ENCODE measurements at regions of chr22 and their contacts with region 1.

Region 1: GRCh38 chr22:38921806-38922205 is 35.6 kb upstream of the APOBEC3A start:
- DNase-seq: no peak
- ATAC-seq: no peak
- H3K4me3 ChIP-seq: no peak overlapping the region
- H3K4me3 Mint-ChIP-seq: no peak overlapping the region
- H3K27ac ChIP-seq: no peak overlapping the region
- H3K27ac Mint-ChIP-seq: no peak overlapping the region
- H3K4me1 ChIP-seq: no peaks in the 10 kb centered on the region
- H3K4me1 Mint-ChIP-seq: no peaks in the 10 kb centered on the region
- H3K27me3 ChIP-seq: peaks cover 0 to 32% (median 10%) of the 10 kb centered on the region in 4 experiments
- H3K27me3 Mint-ChIP-seq: peaks cover 56% of the 10 kb centered on the region
- CTCF ChIP-seq: no peak

Region 2: GRCh38 chr22:38824585-38824984 is 97.2 kb before region 1 on chr22:
- CTCF ChIA-PET with region 1: no interaction called
- POLR2A ChIA-PET with region 1: no interaction called
- intact Hi-C with region 1: no loop called
- DNase-seq: peak; percentile 56
- ATAC-seq: peak; percentile 49
- H3K4me3 ChIP-seq: no peak overlapping the region
- H3K4me3 Mint-ChIP-seq: no peak overlapping the region
- H3K27ac ChIP-seq: no peak overlapping the region
- H3K27ac Mint-ChIP-seq: peak overlapping the region; percentile 47
- H3K4me1 ChIP-seq: no peaks in the 10 kb centered on the region
- H3K4me1 Mint-ChIP-seq: no peaks in the 10 kb centered on the region
- H3K27me3 ChIP-seq: no peaks in the 10 kb centered on the region
- H3K27me3 Mint-ChIP-seq: peaks cover 12% of the 10 kb centered on the region
- CTCF ChIP-seq: no peak

Region 3: DNA sequence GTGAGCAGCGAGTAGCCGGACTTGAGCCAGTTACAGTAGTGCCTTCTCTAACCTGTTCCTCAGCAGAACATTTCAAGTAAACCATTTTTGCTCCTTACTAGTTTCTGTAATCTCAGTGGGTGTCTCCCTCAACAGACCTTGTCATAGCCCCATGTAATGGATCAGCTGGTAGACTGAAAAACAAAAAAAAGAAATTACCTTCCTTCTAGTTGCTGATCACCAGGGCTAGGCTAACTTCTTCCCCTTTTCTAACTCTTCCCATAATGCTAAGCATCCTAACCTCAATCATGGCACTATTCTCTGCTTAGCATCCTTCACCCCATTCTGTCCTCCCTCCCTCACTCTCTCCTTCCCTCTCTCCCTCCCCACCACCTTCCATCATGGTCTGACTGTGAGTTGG is 14.0 kb before region 1 on chr22:
- CTCF ChIA-PET with region 1: no interaction called
- POLR2A ChIA-PET with region 1: interaction called, 10 read pairs
- intact Hi-C with region 1: no loop called
- DNase-seq: no peak
- ATAC-seq: no peak
- H3K4me3 ChIP-seq: no peak overlapping the region
- H3K4me3 Mint-ChIP-seq: no peak overlapping the region
- H3K27ac ChIP-seq: no peak overlapping the region
- H3K27ac Mint-ChIP-seq: no peak overlapping the region
- H3K4me1 ChIP-seq: peaks cover 0 to 6% of the 10 kb centered on the region in 2 donors
- H3K4me1 Mint-ChIP-seq: no peaks in the 10 kb centered on the region
- H3K27me3 ChIP-seq: peaks cover 0 to 11% (median 2%) of the 10 kb centered on the region in 4 experiments
- H3K27me3 Mint-ChIP-seq: peaks cover 40% of the 10 kb centered on the region
- CTCF ChIP-seq: no peak

Region 4: GRCh38 chr22:38973289-38974169 is 51.7 kb after region 1 on chr22:
- CTCF ChIA-PET with region 1: no interaction called
- POLR2A ChIA-PET with region 1: no interaction called
- intact Hi-C with region 1: no loop called
- DNase-seq: peak; percentile 71
- ATAC-seq: peak; percentile 89
- H3K4me3 ChIP-seq: no peak overlapping the region
- H3K4me3 Mint-ChIP-seq: no peak overlapping the region
- H3K27ac ChIP-seq: no peak overlapping the region
- H3K27ac Mint-ChIP-seq: no peak overlapping the region
- H3K4me1 ChIP-seq: peaks cover 0 to 8% of the 10 kb centered on the region in 2 donors
- H3K4me1 Mint-ChIP-seq: peaks cover 6% of the 10 kb centered on the region
- H3K27me3 ChIP-seq: peaks cover 0 to 20% (median 0%) of the 10 kb centered on the region in 4 experiments
- H3K27me3 Mint-ChIP-seq: peaks cover 24% of the 10 kb centered on the region
- CTCF ChIP-seq: peak; percentile 92

Measured in B cell (primary cell).